ENCODE measurements at regions of chr3 and their contacts with region 1.

Region 1: DNA sequence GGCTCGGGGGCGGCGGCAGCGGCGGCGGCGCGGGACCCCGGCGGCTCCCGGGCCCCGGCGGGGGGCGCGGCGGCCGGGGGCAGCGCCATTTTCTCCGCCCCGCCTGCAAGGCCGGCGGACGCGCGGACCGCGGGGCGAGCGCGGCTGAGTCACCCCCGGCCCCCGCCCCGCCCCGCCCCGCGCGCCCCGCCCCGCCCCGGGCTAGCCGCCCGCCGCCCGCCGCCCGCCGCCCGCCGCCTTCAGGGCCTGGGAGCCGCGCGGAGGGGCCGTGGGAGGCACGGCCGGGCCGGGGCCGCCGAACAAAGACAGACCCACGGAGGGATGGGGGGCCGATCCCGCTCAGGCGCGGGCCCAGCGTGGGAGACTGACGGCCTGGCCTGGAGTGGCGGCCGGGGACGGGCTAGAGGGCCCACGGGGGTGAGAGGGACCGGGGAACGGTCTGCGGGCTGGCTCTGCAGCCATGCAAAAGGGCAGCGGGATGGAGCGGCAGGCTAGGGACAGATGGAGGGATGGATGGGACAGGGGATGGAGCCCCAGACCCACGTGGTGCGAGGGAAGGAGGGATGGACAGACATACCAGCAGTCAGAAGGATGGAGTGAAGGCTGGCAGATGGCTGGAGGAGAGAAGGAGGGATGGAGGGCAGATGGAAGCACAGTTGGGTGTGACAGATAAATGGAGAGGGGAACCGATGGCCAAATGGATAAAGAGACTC is at the start of gene EIF4E3:
- DNase-seq: peak; percentile 34 to 71 (median 65)
- H3K4me3 ChIP-seq: peak within 1 kb of the TSS; percentile 69 to 94 (median 88)
- H3K27ac ChIP-seq: no peak within 1 kb of the TSS
- H3K4me1 ChIP-seq: peaks cover 13 to 58% (median 27%) of the 10 kb centered on the region in 4 experiments
- H3K27me3 ChIP-seq: peaks cover 0 to 9% (median 0%) of the 10 kb centered on the region in 5 experiments

Region 2: GRCh38 chr3:71710906-71711494 is 14.4 kb before region 1 on chr3:
- CTCF ChIA-PET with region 1: interaction called, 18 read pairs
- POLR2A ChIA-PET with region 1: no interaction called
- DNase-seq: peak; percentile 63 to 78 (median 76)
- H3K4me3 ChIP-seq: no peak overlapping the region
- H3K27ac ChIP-seq: no peak overlapping the region
- H3K4me1 ChIP-seq: peaks cover 3 to 18% (median 13%) of the 10 kb centered on the region in 4 experiments
- H3K27me3 ChIP-seq: no peaks in the 10 kb centered on the region

Region 3: DNA sequence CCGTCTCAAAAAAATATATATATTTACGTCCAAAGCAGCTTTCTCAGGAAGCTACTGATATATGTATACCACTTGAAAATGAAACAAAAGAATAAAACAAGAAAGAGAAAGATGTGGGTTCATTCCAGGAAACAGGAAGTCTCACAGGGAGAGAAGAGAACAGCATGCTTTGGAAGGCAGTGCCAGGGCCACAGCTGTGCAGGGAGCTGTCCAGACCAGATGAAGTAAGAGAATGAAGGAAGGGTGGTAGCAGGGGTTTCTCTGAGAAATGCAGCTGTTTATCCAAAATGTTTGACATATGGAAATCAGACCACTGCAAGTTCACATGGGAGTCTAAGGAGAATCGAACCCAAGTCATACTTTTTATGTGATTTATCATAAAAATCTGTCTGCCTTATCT is 19.3 kb after region 1 on chr3:
- CTCF ChIA-PET with region 1: interaction called, 14 read pairs
- POLR2A ChIA-PET with region 1: no interaction called
- DNase-seq: no peak
- H3K4me3 ChIP-seq: no peak overlapping the region
- H3K27ac ChIP-seq: no peak overlapping the region
- H3K4me1 ChIP-seq: no peaks in the 10 kb centered on the region
- H3K27me3 ChIP-seq: peaks cover 0 to 3% (median 0%) of the 10 kb centered on the region in 5 experiments

Region 4: DNA sequence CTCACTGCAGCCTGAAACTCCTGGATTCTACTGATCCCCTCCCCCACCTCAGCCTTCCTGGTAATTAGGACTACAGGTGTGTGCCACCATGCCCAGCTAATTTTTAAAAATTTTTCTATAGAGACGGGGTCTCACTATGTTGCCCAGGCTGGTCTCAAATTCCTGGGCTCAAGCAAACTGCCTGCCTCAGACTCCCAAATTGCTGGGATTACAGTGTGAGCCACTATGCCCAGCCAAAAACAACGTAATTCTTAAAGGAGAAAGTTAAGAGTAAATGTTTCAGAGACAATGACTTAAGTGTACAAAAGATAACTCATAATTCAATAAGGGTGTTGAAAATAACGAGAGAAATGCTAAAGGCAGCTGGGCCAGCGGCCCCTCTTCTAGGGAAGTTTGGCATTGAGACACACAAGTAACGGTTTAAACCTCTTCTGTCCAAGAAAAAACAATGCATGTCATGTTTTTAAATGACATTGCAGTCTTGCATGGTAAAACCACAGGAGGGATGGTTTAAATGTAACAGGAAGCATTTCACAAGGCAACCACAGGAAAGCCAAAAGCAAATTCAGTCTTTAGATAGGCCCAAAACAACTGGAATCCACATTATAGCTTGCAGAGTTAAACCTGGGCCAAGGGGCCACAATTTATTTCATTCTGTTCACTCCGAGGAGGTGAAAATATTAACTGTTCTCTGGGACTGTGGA is 54.4 kb after region 1 on chr3:
- CTCF ChIA-PET with region 1: interaction called, 11 read pairs
- POLR2A ChIA-PET with region 1: no interaction called
- DNase-seq: peak; percentile 81 to 96 (median 93)
- H3K4me3 ChIP-seq: peak overlapping the region in 5 of 7 experiments; percentile 15 to 63 (median 59)
- H3K27ac ChIP-seq: peak overlapping the region; percentile 16 to 76
- H3K4me1 ChIP-seq: peaks cover 16 to 71% (median 37%) of the 10 kb centered on the region in 4 experiments
- H3K27me3 ChIP-seq: peaks cover 0 to 21% (median 16%) of the 10 kb centered on the region in 5 experiments

Region 5: DNA sequence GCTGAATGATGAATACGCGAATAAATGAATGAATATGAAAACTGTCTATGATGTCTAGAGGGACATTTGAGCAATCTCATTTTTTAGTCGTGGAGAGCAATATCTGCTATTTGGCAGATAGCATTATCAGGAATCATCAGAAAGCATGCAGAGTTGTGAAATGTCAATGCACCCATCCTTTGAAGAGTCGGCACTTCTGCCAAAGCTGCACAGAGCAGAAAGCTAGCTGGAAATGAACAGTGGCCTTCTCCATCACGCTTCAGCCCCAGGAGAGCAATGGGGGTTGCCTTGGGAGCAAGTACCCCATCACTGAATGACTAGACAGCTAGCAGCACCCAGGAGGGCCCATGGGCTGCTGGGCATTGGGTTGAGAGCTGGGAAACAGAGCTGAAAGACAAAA is 128.7 kb after region 1 on chr3:
- CTCF ChIA-PET with region 1: interaction called, 97 read pairs
- POLR2A ChIA-PET with region 1: no interaction called
- DNase-seq: peak in 2 of 3 donors; percentile 9 to 18
- H3K4me3 ChIP-seq: no peak overlapping the region
- H3K27ac ChIP-seq: no peak overlapping the region
- H3K4me1 ChIP-seq: peaks cover 0 to 11% (median 8%) of the 10 kb centered on the region in 4 experiments
- H3K27me3 ChIP-seq: no peaks in the 10 kb centered on the region

Region 6: GRCh38 chr3:71859123-71859519 is 133.7 kb after region 1 on chr3:
- CTCF ChIA-PET with region 1: interaction called, 97 read pairs
- POLR2A ChIA-PET with region 1: no interaction called
- DNase-seq: peak; percentile 88 to 96 (median 94)
- H3K4me3 ChIP-seq: no peak overlapping the region
- H3K27ac ChIP-seq: no peak overlapping the region
- H3K4me1 ChIP-seq: peaks cover 2 to 6% (median 4%) of the 10 kb centered on the region in 4 experiments
- H3K27me3 ChIP-seq: peaks cover 0 to 2% (median 0%) of the 10 kb centered on the region in 5 experiments

Region 7: GRCh38 chr3:72109327-72110259 is 384.2 kb after region 1 on chr3:
- CTCF ChIA-PET with region 1: no interaction called
- POLR2A ChIA-PET with region 1: no interaction called
- DNase-seq: peak in 2 of 3 donors; percentile 44 to 53
- H3K4me3 ChIP-seq: no peak overlapping the region
- H3K27ac ChIP-seq: no peak overlapping the region
- H3K4me1 ChIP-seq: peaks cover 0 to 8% (median 2%) of the 10 kb centered on the region in 4 experiments
- H3K27me3 ChIP-seq: no peaks in the 10 kb centered on the region

Measured in common myeloid progenitor, CD34-positive (primary cell).